Activated CD4-positive, alpha-beta T cell treated with anti-CD3 and anti-CD28 coated beads, Interleukin-2, amount 10 ng/mL, durations not matched to agents 24 days and 14 days (primary cell): ENCODE measurements at regions of chr2 and their contacts with region 1.

Region 1: GRCh38 chr2:178112202-178113152 is at the start of gene RBM45:
- DNase-seq: peak; percentile 96
- H3K4me3 Mint-ChIP-seq: peak within 1 kb of the TSS; percentile 87
- H3K27ac Mint-ChIP-seq: peak within 1 kb of the TSS; percentile 88
- H3K4me1 Mint-ChIP-seq: peaks cover 27% of the 10 kb centered on the region
- H3K27me3 Mint-ChIP-seq: no peaks in the 10 kb centered on the region
- total RNA-seq, gene RBM45: 16.8 and 22.8 TPM in 2 replicates

Region 2: DNA sequence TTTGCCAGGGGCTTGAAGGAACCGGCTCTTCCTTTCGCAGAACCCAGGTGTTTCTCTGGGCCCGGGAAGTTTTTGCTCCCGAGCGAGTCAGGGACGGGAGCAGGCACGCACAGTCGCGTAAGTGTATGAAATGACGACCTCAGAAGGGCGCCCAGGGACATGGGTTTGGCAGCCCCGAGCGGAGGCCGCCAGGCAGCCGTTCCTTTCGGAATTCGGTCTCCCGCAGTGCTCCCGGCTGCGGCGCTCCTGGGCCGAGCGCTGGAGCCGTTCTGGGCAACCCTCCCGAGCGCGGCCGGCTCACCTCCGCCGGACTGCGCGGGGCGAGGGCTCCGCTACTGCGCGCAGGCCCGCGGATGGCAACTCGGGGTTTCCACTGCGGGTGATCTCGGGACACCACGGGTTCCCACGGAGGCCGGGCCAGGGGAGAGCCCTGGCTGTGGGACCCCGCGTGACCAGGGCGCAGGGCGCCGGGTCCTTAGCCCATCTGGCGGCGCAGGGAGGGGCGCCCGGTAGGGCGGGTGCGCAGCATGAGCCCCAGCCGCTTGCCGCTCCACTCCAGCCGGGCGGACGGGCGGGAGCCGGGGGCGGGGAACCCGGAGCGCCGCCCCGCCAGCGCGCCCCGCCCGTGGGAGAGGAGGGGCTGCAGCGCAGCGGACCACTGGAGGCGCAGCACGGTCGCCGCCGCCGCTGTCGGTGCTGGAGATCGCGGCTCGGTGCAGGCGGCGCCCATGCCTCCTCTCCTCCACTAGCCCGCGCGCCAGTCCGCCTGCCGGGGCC is 81.5 kb after region 1 on chr2 and contains the start of gene OSBPL6:
- intact Hi-C with region 1: loop called (anchors 1 kb)
- DNase-seq: peak; percentile 94
- H3K4me3 Mint-ChIP-seq: peak within 1 kb of the TSS; percentile 80
- H3K27ac Mint-ChIP-seq: no peak within 1 kb of the TSS
- H3K4me1 Mint-ChIP-seq: peaks cover 8% of the 10 kb centered on the region
- H3K27me3 Mint-ChIP-seq: peaks cover 55% of the 10 kb centered on the region
- total RNA-seq, gene OSBPL6: 1.1 and 1.5 TPM in 2 replicates

Region 3: GRCh38 chr2:178280244-178280852 is 167.9 kb after region 1 on chr2:
- intact Hi-C with region 1: loop called (anchors 1 kb)
- DNase-seq: peak; percentile 84
- H3K4me3 Mint-ChIP-seq: no peak overlapping the region
- H3K27ac Mint-ChIP-seq: no peak overlapping the region
- H3K4me1 Mint-ChIP-seq: no peaks in the 10 kb centered on the region
- H3K27me3 Mint-ChIP-seq: peaks cover 24% of the 10 kb centered on the region

Region 4: GRCh38 chr2:178397002-178397605 is 284.6 kb after region 1 on chr2:
- intact Hi-C with region 1: loop called (anchors 5 kb)
- DNase-seq: peak; percentile 67
- H3K4me3 Mint-ChIP-seq: no peak overlapping the region
- H3K27ac Mint-ChIP-seq: no peak overlapping the region
- H3K4me1 Mint-ChIP-seq: peaks cover 5% of the 10 kb centered on the region
- H3K27me3 Mint-ChIP-seq: peaks cover 17% of the 10 kb centered on the region

Region 5: GRCh38 chr2:178450774-178451525 is 338.5 kb after region 1 on chr2 and contains the starts of genes PJVK and PRKRA:
- intact Hi-C with region 1: loop called (anchors 1 kb)
- DNase-seq: peak; percentile 99
- H3K4me3 Mint-ChIP-seq: peak within 1 kb of the TSS; percentile 94
- H3K27ac Mint-ChIP-seq: peak within 1 kb of the TSS; percentile 98
- H3K4me1 Mint-ChIP-seq: peaks cover 25% of the 10 kb centered on the region
- H3K27me3 Mint-ChIP-seq: peaks cover 7% of the 10 kb centered on the region
- total RNA-seq, gene PJVK: 2.0 and 2.3 TPM in 2 replicates
- total RNA-seq, gene PRKRA: 52.4 and 61.2 TPM in 2 replicates

Region 6: DNA sequence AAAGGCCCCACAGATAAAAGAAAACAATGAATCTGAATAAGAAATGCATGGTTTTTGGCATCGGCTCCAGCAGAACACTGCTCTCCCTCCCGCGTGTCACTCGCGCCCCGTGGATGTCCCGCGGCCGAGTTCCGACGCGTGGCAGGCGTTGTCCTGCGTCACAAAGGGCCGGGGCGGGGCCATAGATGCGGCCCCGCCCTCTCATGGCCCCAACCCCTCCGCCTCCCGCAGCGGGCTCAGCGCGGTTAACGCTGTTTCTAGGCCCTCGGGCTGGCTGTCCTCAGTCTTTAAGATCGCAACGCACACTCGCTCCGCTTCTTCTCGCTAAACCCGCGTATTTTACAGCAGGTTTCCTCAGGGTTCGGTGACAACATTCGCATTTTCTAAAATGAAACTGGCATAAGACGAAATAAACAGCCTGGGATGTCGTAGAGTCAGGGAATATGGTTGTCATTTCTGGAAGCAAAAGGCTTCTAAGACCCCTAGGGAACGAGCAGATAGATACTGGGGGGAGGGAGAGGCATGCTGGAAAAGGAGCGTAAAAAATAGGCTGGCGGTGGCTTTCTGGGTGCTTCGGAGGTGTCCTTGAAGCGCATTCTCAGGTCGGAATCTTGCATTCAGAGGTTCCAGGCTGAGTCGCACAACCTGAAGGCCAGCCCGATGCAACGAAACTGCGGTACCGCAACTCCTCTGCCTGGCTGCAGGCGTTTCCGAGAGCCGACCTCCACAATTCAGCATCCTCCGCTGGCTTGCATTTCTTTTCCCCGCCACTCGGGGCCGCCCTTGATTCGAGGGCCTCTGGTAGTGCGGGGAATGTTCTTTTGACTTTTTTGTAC is 366.2 kb after region 1 on chr2 and contains the start of gene FKBP7:
- intact Hi-C with region 1: loop called (anchors 2 kb)
- DNase-seq: peak; percentile 94
- H3K4me3 Mint-ChIP-seq: peak within 1 kb of the TSS; percentile 93
- H3K27ac Mint-ChIP-seq: peak within 1 kb of the TSS; percentile 97
- H3K4me1 Mint-ChIP-seq: peaks cover 35% of the 10 kb centered on the region
- H3K27me3 Mint-ChIP-seq: no peaks in the 10 kb centered on the region
- total RNA-seq, gene FKBP7: 4.8 and 4.9 TPM in 2 replicates

Region 7: DNA sequence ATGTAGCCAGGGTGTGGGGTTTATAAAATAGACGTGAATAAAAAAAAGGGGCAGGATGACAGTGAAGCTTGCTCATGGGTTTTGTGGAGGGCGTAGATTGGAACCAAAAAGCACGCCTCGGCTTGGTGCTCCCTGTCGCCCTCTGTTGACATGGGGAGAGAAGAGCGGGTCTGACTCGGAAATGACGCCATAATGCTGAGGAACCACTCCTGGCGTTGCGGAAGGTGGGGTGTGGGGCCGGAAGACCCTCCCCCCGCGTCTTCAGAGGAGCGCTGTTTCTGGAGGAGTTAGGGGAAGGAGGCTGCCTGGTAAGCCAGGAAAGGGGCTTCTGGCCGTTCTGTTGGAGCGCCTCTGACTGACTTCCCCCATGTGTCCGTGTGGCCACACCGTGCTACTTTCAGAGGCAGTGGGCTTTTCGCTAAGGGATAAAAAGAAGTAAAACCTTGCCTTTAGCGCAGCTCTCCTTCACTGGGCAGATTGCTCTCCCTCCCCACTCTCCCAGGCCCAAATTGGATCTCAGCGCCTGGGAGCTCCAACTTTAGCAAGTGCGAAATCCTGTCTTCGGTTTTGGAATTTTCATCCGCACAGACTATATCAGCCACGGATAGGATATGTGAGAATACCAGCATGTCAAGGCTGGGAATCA is 410.6 kb after region 1 on chr2:
- intact Hi-C with region 1: loop called (anchors 5 kb)
- DNase-seq: peak; percentile 96
- H3K4me3 Mint-ChIP-seq: peak overlapping the region; percentile 95
- H3K27ac Mint-ChIP-seq: peak overlapping the region; percentile 91
- H3K4me1 Mint-ChIP-seq: peaks cover 37% of the 10 kb centered on the region
- H3K27me3 Mint-ChIP-seq: no peaks in the 10 kb centered on the region

Region 8: DNA sequence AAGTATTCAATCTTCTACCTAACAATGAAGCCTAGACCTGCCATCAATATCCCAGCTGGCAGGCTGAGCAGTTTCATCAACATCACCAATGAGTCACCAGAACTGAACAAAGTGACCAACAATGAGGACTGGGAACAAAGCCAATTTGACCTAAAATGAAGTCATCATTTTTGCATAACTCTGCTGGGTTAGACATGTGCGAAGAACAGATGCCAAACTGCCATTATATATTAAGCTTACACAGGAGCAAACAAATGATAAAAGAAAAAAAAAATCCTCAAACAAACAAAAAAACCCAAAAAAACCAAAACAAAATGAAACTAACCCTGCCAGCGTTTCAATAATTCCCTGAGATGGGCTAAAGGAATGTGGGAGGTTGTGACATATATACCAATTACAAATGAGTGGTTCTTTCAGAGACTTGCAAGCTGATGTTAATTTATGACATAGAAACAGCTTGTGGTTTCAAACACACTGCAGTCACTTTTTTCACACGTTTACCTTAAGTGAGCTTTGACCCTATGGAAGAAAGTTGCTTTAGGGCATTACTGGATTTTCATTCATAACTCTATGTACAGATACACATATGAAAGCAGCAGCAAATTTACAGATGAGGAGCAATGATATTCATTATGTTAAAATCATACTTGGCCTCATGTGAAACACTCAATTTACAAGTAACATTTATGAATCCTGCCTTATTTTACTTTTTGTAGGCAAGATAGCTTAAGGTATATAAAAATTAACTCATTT is 994.4 kb after region 1 on chr2:
- intact Hi-C with region 1: no loop called
- DNase-seq: no peak
- H3K4me3 Mint-ChIP-seq: peak overlapping the region; percentile 38
- H3K27ac Mint-ChIP-seq: peak overlapping the region; percentile 46
- H3K4me1 Mint-ChIP-seq: peaks cover 29% of the 10 kb centered on the region
- H3K27me3 Mint-ChIP-seq: no peaks in the 10 kb centered on the region